ENCODE measurements at regions of chr6 and their contacts with region 1.

Region 1: GRCh38 chr6:150072201-150072600 is 3.3 kb upstream of the ULBP3 start:
- DNase-seq: no peak

Region 2: GRCh38 chr6:150334790-150335783 is 262.9 kb after region 1 on chr6:
- intact Hi-C with region 1: loop called (anchors 5 kb)
- DNase-seq: peak in 33 of 42 donors; percentile 9 to 78 (median 53)